BJ (cell line): ENCODE measurements at regions of chr6 and their contacts with region 1.

Region 1: GRCh38 chr6:43143235-43144124 is 27.6 kb upstream of the SRF start:
- DNase-seq: peak; percentile 62
- H3K4me3 ChIP-seq: no peak overlapping the region
- H3K27me3 ChIP-seq: no peaks in the 10 kb centered on the region
- CTCF ChIP-seq: peak; percentile 99

Region 2: GRCh38 chr6:43053545-43054205 is 89.8 kb before region 1 on chr6 and contains the start of gene CUL7:
- CTCF ChIA-PET with region 1: interaction called, 25 read pairs
- POLR2A ChIA-PET with region 1: no interaction called
- DNase-seq: peak; percentile 75
- H3K4me3 ChIP-seq: peak within 1 kb of the TSS; percentile 78
- H3K27me3 ChIP-seq: no peaks in the 10 kb centered on the region
- CTCF ChIP-seq: no peak
- polyA plus RNA-seq, gene CUL7: 31.8 and 50.7 TPM in 2 replicates

Region 3: GRCh38 chr6:43070028-43070632 is 73.3 kb before region 1 on chr6:
- CTCF ChIA-PET with region 1: interaction called, 42 read pairs
- POLR2A ChIA-PET with region 1: no interaction called
- DNase-seq: no peak
- H3K4me3 ChIP-seq: no peak overlapping the region
- H3K27me3 ChIP-seq: no peaks in the 10 kb centered on the region
- CTCF ChIP-seq: peak; percentile 78

Region 4: GRCh38 chr6:43120944-43121913 is 22.3 kb before region 1 on chr6:
- CTCF ChIA-PET with region 1: interaction called, 25 read pairs
- POLR2A ChIA-PET with region 1: no interaction called
- DNase-seq: peak; percentile 95
- H3K4me3 ChIP-seq: no peak overlapping the region
- H3K27me3 ChIP-seq: no peaks in the 10 kb centered on the region
- CTCF ChIP-seq: peak; percentile 36

Region 5: GRCh38 chr6:43174263-43175112 is 31.0 kb after region 1 on chr6:
- CTCF ChIA-PET with region 1: interaction called, 11 read pairs
- POLR2A ChIA-PET with region 1: interaction called, 3 read pairs
- DNase-seq: peak; percentile 98
- H3K4me3 ChIP-seq: peak overlapping the region; percentile 87
- H3K27me3 ChIP-seq: no peaks in the 10 kb centered on the region
- CTCF ChIP-seq: peak; percentile 15; the same call in 1 of the 2 replicates